Tibial artery (tissue), 4 donors: ENCODE measurements at regions of chr9 and their contacts with region 1.

Region 1: DNA sequence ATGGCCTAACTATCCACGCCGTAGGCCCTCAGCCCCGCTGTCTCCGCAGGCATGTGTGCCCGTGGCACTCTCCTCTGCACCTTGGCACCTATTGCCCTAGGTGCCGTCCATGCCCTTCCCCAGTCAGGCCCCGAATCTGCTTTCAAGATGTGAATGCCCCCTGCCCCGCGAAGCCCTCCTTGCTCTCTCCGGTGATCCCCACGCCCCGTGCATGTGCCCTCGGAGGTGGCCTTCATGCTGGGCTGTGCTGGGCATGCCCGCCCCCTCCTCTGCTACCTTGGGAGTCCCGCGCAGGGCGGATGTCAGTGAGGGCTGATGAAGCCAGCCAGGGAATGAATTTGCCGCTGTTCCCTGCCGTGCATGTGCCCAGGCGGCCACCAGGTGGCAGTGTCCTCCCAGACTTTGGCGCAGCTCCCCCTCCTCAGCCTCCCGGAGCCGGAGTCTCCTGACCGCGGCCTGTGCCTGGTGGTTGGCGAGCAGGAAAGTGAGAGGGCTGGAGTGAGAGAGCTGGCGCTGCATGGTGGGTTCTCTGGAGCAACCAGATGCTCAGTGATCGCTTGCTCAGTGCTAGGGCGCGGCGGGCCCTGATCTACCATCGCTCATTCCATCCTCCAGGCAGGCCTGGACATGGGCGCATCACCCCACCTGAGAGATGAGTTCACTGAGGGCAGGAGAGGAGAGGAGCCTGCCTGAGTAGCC is 112.9 kb upstream of the LMX1B start:
- DNase-seq: peak; percentile 47 to 80
- H3K4me3 ChIP-seq: no peak overlapping the region
- H3K27ac ChIP-seq: no peak overlapping the region
- H3K4me1 ChIP-seq: peaks cover 0 to 27% (median 17%) of the 10 kb centered on the region in 4 donors
- H3K27me3 ChIP-seq: peaks cover 0 to 10% of the 10 kb centered on the region in 2 donors
- CTCF ChIP-seq: peak; percentile 84 to 91

Region 2: GRCh38 chr9:126558051-126558665 is 57.3 kb after region 1 on chr9:
- intact Hi-C with region 1: loop called (anchors 2 kb)
- DNase-seq: peak in 1 of 2 donors; percentile 34
- H3K4me3 ChIP-seq: no peak overlapping the region
- H3K27ac ChIP-seq: no peak overlapping the region
- H3K4me1 ChIP-seq: no peaks in the 10 kb centered on the region
- H3K27me3 ChIP-seq: peaks cover 0 to 48% of the 10 kb centered on the region in 2 donors
- CTCF ChIP-seq: peak; percentile 75 to 90